Naive thymus-derived CD4-positive, alpha-beta T cell (primary cell): ENCODE measurements at regions of chr7 and their contacts with region 1.

Region 1: GRCh38 chr7:32761451-32762205 is 129.9 kb downstream of the KBTBD2 start:
- DNase-seq: no peak
- ATAC-seq: no peak
- H3K4me3 ChIP-seq: no peak overlapping the region
- H3K4me3 Mint-ChIP-seq: peak overlapping the region in 4 of 10 donors; percentile 25 to 75 (median 45)
- H3K27ac ChIP-seq: no peak overlapping the region
- H3K27ac Mint-ChIP-seq: no peak overlapping the region
- H3K4me1 ChIP-seq: no peaks in the 10 kb centered on the region
- H3K4me1 Mint-ChIP-seq: peaks cover 3 to 19% (median 12%) of the 10 kb centered on the region in 7 donors
- H3K27me3 ChIP-seq: peaks cover 0 to 7% of the 10 kb centered on the region in 2 donors
- H3K27me3 Mint-ChIP-seq: peaks cover 32 to 68% (median 52%) of the 10 kb centered on the region in 5 donors

Region 2: GRCh38 chr7:32490127-32490822 is 271.4 kb before region 1 on chr7 and contains the start of gene LSM5:
- CTCF ChIA-PET with region 1: no interaction called
- POLR2A ChIA-PET with region 1: no interaction called
- intact Hi-C with region 1: loop called in 1 of 2 experiments (anchors 2 kb)
- DNase-seq: peak; percentile 77 to 91 (median 89)
- ATAC-seq: peak; percentile 84
- H3K4me3 ChIP-seq: peak within 1 kb of the TSS; percentile 86
- H3K4me3 Mint-ChIP-seq: peak within 1 kb of the TSS; percentile 83 to 98 (median 92)
- H3K27ac ChIP-seq: peak within 1 kb of the TSS; percentile 87
- H3K27ac Mint-ChIP-seq: peak within 1 kb of the TSS; percentile 90 to 98 (median 96)
- H3K4me1 ChIP-seq: peaks cover 8 to 13% of the 10 kb centered on the region in 2 donors
- H3K4me1 Mint-ChIP-seq: peaks cover 12 to 43% (median 31%) of the 10 kb centered on the region in 7 donors
- H3K27me3 ChIP-seq: no peaks in the 10 kb centered on the region
- H3K27me3 Mint-ChIP-seq: no peaks in the 10 kb centered on the region
- total RNA-seq, gene LSM5: 21.5 to 58.8 (median 39.4) TPM

Region 3: DNA sequence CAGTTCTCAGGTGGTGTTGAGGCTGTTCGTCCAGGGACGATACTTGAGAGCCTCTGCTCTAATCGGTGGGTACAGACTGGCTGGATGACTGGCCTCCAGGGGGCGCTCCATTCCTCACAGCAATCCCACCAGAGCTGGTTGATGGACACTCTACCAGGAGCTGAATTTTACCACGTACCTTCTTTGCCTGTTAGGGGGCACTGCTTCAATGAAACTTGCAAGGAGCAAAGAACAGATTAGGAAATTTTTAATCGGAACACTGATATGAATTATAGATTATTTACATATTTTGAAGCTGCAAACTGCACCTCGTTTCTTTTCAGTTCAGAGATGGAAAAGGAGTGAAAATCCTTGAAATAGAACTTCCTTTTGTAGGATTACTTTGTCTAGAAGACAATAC is 85.1 kb after region 1 on chr7:
- CTCF ChIA-PET with region 1: no interaction called
- POLR2A ChIA-PET with region 1: no interaction called
- intact Hi-C with region 1: loop called in 1 of 2 experiments (anchors 1 kb)
- DNase-seq: peak; percentile 77 to 89 (median 86)
- ATAC-seq: peak; percentile 100
- H3K4me3 ChIP-seq: no peak overlapping the region
- H3K4me3 Mint-ChIP-seq: peak overlapping the region in 6 of 10 donors; percentile 15 to 42 (median 30)
- H3K27ac ChIP-seq: no peak overlapping the region
- H3K27ac Mint-ChIP-seq: peak overlapping the region in 1 of 9 donors; percentile 33
- H3K4me1 ChIP-seq: peaks cover 7% of the 10 kb centered on the region in 2 donors
- H3K4me1 Mint-ChIP-seq: peaks cover 6 to 10% (median 9%) of the 10 kb centered on the region in 7 donors
- H3K27me3 ChIP-seq: peaks cover 0 to under 1% of the 10 kb centered on the region in 2 donors
- H3K27me3 Mint-ChIP-seq: peaks cover 12 to 44% (median 23%) of the 10 kb centered on the region in 5 donors

Region 4: DNA sequence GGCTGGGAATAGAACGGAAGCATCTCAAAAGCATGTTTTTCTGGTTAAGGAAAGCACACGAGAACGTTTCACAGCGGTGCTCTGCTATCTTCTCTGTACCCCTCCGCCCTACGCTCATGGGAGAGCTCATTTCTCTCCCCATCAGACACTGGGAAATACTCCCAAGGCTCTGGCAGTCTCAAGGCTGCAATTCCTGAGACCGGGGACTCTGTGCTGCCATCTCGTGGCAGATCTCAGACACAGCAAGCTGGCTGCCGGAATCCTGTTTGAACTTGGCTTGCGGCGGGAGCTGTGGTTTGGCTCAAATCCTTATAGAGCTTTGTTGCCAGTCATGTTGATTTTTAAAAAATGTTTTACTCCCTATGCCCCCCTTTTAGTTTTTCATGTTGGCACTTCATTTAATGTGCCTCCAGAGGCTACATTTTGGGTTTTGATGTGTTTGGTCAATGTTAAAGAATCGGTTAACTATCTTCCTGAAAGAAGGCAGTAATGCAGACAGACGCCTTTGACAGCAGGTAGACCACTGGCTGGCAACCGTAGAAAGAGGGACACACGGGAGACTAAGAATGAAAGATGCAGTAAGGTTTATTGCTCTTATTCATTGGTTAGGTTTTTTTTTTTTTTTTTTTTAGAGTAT is 1171.3 kb after region 1 on chr7:
- CTCF ChIA-PET with region 1: no interaction called
- POLR2A ChIA-PET with region 1: no interaction called
- intact Hi-C with region 1: loop called (anchors 1 to 5 kb)
- DNase-seq: peak; percentile 2 to 53 (median 39)
- ATAC-seq: peak; percentile 63
- H3K4me3 ChIP-seq: no peak overlapping the region
- H3K4me3 Mint-ChIP-seq: no peak overlapping the region
- H3K27ac ChIP-seq: no peak overlapping the region
- H3K27ac Mint-ChIP-seq: no peak overlapping the region
- H3K4me1 ChIP-seq: no peaks in the 10 kb centered on the region
- H3K4me1 Mint-ChIP-seq: peaks cover 0 to 6% (median 0%) of the 10 kb centered on the region in 7 donors
- H3K27me3 ChIP-seq: no peaks in the 10 kb centered on the region
- H3K27me3 Mint-ChIP-seq: peaks cover 5 to 20% (median 12%) of the 10 kb centered on the region in 5 donors

Region 5: GRCh38 chr7:34321000-34321581 is 1559.5 kb after region 1 on chr7:
- CTCF ChIA-PET with region 1: no interaction called
- POLR2A ChIA-PET with region 1: no interaction called
- intact Hi-C with region 1: loop called in 1 of 2 experiments (anchors 10 kb)
- DNase-seq: peak in 6 of 9 donors; percentile 18 to 38 (median 25)
- ATAC-seq: peak; percentile 55
- H3K4me3 ChIP-seq: no peak overlapping the region
- H3K4me3 Mint-ChIP-seq: peak overlapping the region in 5 of 10 donors; percentile 3 to 51 (median 37)
- H3K27ac ChIP-seq: no peak overlapping the region
- H3K27ac Mint-ChIP-seq: no peak overlapping the region
- H3K4me1 ChIP-seq: no peaks in the 10 kb centered on the region
- H3K4me1 Mint-ChIP-seq: peaks cover 0 to 9% (median 3%) of the 10 kb centered on the region in 7 donors
- H3K27me3 ChIP-seq: no peaks in the 10 kb centered on the region
- H3K27me3 Mint-ChIP-seq: peaks cover 8 to 31% (median 22%) of the 10 kb centered on the region in 5 donors